Sigmoid colon (tissue), 7 donors: ENCODE measurements at regions of chr7 and their contacts with region 1.

Region 1: GRCh38 chr7:1569833-1570633 is at the start of gene PSMG3:
- DNase-seq: peak; percentile 96
- H3K4me3 ChIP-seq: peak within 1 kb of the TSS; percentile 65 to 91 (median 78)
- H3K27ac ChIP-seq: peak within 1 kb of the TSS; percentile 90 to 95 (median 92)
- H3K4me1 ChIP-seq: peaks cover 0 to 37% (median 29%) of the 10 kb centered on the region in 4 donors
- H3K27me3 ChIP-seq: no peaks in the 10 kb centered on the region
- CTCF ChIP-seq: peak; percentile 30 to 59 (median 35)
- EP300 ChIP-seq: no peak
- POLR2A ChIP-seq: peak; percentile 57 to 69
- total RNA-seq, gene PSMG3: 23.3 to 52.8 (median 41.6) TPM

Region 2: GRCh38 chr7:1503816-1504775 is 65.9 kb before region 1 on chr7 and contains the start of gene INTS1:
- intact Hi-C with region 1: loop called (anchors 1 kb)
- DNase-seq: peak; percentile 94
- H3K4me3 ChIP-seq: peak within 1 kb of the TSS; percentile 80 to 100 (median 96)
- H3K27ac ChIP-seq: peak within 1 kb of the TSS; percentile 58 to 76 (median 68)
- H3K4me1 ChIP-seq: peaks cover 0 to 31% (median 27%) of the 10 kb centered on the region in 4 donors
- H3K27me3 ChIP-seq: no peaks in the 10 kb centered on the region
- CTCF ChIP-seq: peak; percentile 15 to 92 (median 44)
- EP300 ChIP-seq: no peak
- POLR2A ChIP-seq: peak; percentile 24 to 36
- total RNA-seq, gene INTS1: 18.9 to 35.7 (median 26.2) TPM

Region 3: DNA sequence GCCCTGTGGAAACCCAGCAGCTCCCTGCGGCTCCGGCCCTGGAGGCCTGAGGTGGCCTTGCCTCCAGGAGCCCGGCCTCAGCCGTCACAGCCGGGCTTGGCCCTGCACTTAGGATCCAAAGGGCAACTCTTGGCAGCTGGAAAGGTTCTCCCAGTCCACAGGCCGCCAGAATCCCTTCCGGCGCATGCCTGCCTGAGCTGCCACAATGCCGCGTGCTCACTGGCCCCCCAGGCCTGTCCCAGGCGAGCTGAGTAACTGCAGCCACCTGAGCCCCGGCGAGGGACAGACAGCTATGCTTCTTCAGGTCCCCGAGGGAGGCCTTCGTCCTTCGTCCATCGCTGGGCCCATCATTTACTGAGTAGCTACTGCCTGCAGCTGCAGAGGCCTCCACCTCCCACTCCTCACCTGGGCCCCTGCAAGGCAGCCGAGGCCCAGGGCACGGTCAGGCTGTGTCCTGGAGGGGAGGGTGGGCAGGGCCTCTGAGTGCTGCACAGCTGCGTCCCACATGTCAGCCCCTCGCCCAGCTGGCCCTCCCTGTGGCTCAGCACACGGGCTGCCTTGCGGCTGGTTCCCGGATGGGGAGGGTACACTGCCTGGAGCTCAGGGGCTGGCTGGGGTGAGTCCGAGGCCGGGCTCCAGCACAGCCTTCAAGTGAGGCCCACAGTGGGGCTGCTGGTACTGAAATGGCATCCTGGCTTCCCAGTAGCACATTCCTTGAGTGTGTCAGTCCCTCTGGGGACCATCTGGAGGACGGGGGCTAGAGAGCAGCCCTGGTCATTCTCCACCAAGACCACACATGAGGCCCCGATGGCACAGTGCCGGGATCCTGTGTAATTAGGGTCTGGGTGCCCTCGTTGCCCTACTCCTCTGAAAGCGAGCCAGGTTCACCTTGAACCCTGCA is 272.5 kb after region 1 on chr7:
- intact Hi-C with region 1: no loop called
- DNase-seq: peak; percentile 54
- H3K4me3 ChIP-seq: no peak overlapping the region
- H3K27ac ChIP-seq: no peak overlapping the region
- H3K4me1 ChIP-seq: no peaks in the 10 kb centered on the region
- H3K27me3 ChIP-seq: no peaks in the 10 kb centered on the region
- CTCF ChIP-seq: no peak
- EP300 ChIP-seq: no peak
- POLR2A ChIP-seq: no peak